Common myeloid progenitor, CD34-positive (primary cell): ENCODE measurements at regions of chr11 and their contacts with region 1.

Region 1: DNA sequence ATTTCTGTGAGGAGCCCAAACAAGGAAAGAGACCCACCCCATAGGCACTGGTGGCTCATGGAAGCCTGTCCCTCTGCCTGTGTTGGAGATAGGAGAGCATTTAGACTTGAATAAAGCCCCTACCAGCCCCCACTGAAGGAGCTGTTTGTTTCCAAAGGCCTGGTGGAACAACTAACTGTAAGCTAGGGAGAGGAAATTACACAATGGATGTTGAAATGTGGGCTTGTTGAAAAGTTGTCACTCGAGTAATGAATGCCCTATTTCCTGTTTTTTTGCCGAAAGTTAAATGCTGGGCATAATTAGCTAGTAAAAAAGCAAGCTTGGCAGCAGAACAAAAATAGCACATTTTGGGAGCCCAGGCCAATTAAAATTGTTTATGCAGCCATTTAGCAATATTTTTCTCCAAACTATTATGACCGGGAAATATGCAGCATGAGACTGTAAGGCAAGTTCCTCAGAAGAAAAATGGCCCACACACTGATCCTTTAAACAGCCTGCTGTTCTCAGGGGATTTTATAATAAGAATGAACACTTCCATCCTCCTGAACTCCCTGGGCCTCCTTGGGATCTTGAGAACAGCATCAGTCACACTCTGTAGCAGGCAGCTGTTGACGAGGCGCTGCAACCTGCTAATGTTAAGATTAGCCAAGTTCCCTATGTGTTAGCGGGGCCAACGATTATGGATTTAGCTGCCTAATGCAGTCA is 38.6 kb upstream of the LMO2 start:
- DNase-seq: peak; percentile 86 to 97 (median 94)
- H3K4me3 ChIP-seq: peak overlapping the region in 4 of 7 experiments; percentile 21 to 57 (median 42)
- H3K27ac ChIP-seq: peak overlapping the region; percentile 91 to 95
- H3K4me1 ChIP-seq: peaks cover 21 to 86% (median 65%) of the 10 kb centered on the region in 4 experiments
- H3K27me3 ChIP-seq: no peaks in the 10 kb centered on the region

Region 2: DNA sequence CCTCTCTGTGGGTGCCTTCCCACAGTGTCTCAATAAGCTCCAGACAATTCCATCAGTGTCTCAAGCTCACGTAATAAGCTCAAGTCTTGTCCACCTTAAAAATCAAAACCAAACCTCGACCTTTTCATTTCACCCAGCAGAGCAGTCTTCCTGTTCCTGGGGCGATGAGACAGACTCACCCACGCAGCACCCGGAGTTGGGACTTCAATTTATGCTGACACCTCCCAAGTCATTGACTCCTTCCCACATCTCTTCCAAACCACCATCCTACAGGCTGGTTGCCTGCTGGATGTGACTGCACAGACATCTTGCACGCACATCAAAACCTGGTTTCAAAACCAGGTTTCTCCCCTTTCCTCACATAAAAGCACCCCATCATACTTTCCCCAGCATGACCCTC is 111.2 kb before region 1 on chr11:
- CTCF ChIA-PET with region 1: no interaction called
- POLR2A ChIA-PET with region 1: no interaction called
- DNase-seq: no peak
- H3K4me3 ChIP-seq: no peak overlapping the region
- H3K27ac ChIP-seq: no peak overlapping the region
- H3K4me1 ChIP-seq: no peaks in the 10 kb centered on the region
- H3K27me3 ChIP-seq: peaks cover 0 to 28% (median 13%) of the 10 kb centered on the region in 5 experiments

Region 3: GRCh38 chr11:33869481-33870422 is 60.7 kb before region 1 on chr11:
- CTCF ChIA-PET with region 1: interaction called, 16 read pairs
- POLR2A ChIA-PET with region 1: interaction called, 4 read pairs
- DNase-seq: peak; percentile 67 to 88 (median 88)
- H3K4me3 ChIP-seq: peak overlapping the region; percentile 66 to 94 (median 89)
- H3K27ac ChIP-seq: peak overlapping the region; percentile 72 to 91
- H3K4me1 ChIP-seq: peaks cover 37 to 78% (median 65%) of the 10 kb centered on the region in 4 experiments
- H3K27me3 ChIP-seq: no peaks in the 10 kb centered on the region

Region 4: GRCh38 chr11:33881651-33882503 is 48.6 kb before region 1 on chr11:
- CTCF ChIA-PET with region 1: interaction called, 16 read pairs
- POLR2A ChIA-PET with region 1: interaction called, 3 read pairs
- DNase-seq: peak in 2 of 3 donors; percentile 44 to 60
- H3K4me3 ChIP-seq: peak overlapping the region in 6 of 7 experiments; percentile 46 to 90 (median 59)
- H3K27ac ChIP-seq: peak overlapping the region; percentile 80 to 91
- H3K4me1 ChIP-seq: peaks cover 31 to 93% (median 75%) of the 10 kb centered on the region in 4 experiments
- H3K27me3 ChIP-seq: no peaks in the 10 kb centered on the region

Region 5: GRCh38 chr11:33912405-33913361 is 17.8 kb before region 1 on chr11:
- CTCF ChIA-PET with region 1: interaction called, 89 read pairs
- POLR2A ChIA-PET with region 1: interaction called, 6 read pairs
- DNase-seq: peak; percentile 45 to 91 (median 85)
- H3K4me3 ChIP-seq: peak overlapping the region in 1 of 7 experiments; percentile 6
- H3K27ac ChIP-seq: peak overlapping the region; percentile 12 to 60
- H3K4me1 ChIP-seq: peaks cover 21 to 49% (median 32%) of the 10 kb centered on the region in 4 experiments
- H3K27me3 ChIP-seq: no peaks in the 10 kb centered on the region

Region 6: DNA sequence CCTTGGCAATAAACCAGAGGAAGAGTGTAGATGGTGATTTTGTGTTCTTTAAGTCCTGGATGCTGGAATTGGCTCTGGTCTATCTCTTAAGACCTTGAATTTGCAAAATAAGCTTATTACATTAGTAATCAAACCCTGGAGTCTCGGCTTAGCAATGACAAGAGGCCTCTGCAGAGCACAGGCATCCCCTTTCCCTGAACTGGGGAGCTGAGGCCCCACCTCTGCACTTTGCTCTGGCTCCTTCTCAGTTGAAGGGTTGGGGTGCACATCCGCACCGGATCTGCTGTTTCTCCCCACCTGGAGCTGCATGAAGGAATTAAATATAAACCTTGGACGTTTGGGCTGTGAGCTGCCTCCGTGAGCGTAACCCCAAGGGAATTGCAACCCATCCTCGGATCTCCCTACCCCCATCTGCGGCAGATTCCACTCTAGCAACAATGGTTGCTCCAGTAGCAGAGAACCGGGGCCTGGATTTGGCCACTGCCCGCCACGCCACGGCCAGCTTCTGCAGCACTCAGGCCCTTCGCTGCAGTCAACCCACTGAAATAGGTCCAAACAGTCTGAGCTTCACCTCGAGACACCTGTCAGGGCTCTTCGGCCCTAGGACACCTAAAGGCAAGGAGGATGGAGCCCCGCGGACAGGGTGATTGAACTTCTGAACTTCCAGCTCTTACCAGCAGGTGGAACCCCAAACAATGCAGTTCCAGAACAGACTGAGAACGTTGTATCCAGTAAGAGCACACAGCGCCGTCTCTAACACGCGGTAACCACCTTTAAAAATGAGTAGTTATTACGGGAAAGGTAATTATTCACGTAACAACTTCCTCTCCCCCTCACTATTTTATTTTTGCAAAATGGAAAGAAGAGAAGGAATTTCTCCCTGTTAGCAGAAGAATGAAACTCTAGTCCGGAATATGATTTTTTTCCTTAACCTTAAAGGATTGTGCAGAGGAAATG is 66.3 kb after region 1 on chr11:
- CTCF ChIA-PET with region 1: no interaction called
- POLR2A ChIA-PET with region 1: no interaction called
- DNase-seq: peak; percentile 72 to 85 (median 81)
- H3K4me3 ChIP-seq: peak overlapping the region in 4 of 7 experiments; percentile 5 to 54 (median 32)
- H3K27ac ChIP-seq: no peak overlapping the region
- H3K4me1 ChIP-seq: peaks cover 0 to 8% (median 7%) of the 10 kb centered on the region in 4 experiments
- H3K27me3 ChIP-seq: peaks cover 0 to 8% (median 4%) of the 10 kb centered on the region in 5 experiments

Region 7: DNA sequence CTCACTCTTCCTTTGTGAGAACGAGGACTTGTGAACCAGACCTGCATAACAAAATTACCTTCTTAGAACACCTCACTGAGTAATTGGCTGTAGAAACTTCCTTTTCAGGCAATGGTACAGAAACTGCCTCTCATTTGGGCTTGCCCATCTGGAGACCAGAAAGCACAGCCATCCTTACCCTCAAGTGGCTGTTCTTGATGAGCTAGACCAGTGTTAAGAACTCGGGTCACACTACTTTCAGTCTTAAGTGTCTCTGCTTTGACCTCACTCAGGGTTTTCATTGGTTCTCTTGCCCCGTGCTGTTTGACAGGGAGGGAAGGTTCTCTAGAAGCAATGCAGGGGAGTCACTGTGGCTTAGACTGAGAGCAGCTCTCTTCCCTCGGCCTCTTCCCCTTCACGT is 204.3 kb after region 1 on chr11:
- CTCF ChIA-PET with region 1: no interaction called
- POLR2A ChIA-PET with region 1: no interaction called
- DNase-seq: no peak
- H3K4me3 ChIP-seq: no peak overlapping the region
- H3K27ac ChIP-seq: no peak overlapping the region
- H3K4me1 ChIP-seq: no peaks in the 10 kb centered on the region
- H3K27me3 ChIP-seq: no peaks in the 10 kb centered on the region